SK-N-SH (cell line): ENCODE measurements at regions of chr3 and their contacts with region 1.

Region 1: GRCh38 chr3:120227710-120228347 is 57.2 kb downstream of the GPR156 start:
- DNase-seq: no peak
- H3K4me3 ChIP-seq: no peak overlapping the region
- H3K27ac ChIP-seq: no peak overlapping the region
- H3K4me1 ChIP-seq: no peaks in the 10 kb centered on the region
- H3K27me3 ChIP-seq: no peaks in the 10 kb centered on the region
- CTCF ChIP-seq: no peak
- EP300 ChIP-seq: no peak
- RAD21 ChIP-seq: no peak

Region 2: DNA sequence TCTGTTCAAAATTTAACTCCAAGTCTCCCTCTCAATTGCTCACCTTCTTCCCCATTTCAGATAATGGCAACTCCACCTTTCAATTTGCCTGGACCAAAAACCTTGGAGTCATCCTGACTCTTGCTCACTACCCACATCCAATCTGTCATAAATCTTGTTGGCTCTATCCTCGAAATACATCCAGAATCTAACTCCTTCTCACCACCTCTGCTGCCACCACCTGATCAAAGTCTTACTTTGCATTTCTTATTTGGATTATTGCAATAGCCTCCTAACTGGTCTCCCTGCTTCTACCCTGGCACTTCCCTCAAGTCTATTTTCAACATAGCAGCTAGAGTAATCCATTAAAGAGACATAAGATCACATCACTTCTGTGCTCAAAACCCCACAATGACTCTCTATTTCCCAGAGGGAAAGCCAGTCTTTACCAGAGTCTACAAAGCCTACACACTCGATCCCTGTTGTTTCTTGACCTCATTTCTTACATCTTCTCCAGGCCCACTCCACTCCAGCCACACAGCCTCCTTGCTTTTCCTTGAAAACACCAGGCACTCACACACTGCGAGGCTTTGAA is 29.4 kb before region 1 on chr3:
- CTCF ChIA-PET with region 1: no interaction called
- POLR2A ChIA-PET with region 1: no interaction called
- DNase-seq: no peak
- H3K4me3 ChIP-seq: no peak overlapping the region
- H3K27ac ChIP-seq: no peak overlapping the region
- H3K4me1 ChIP-seq: peaks cover 5 to 9% of the 10 kb centered on the region in 2 experiments; a peak in 2 of 4 replicates
- H3K27me3 ChIP-seq: no peaks in the 10 kb centered on the region
- CTCF ChIP-seq: peak; percentile 48
- EP300 ChIP-seq: no peak
- RAD21 ChIP-seq: peak; percentile 64

Region 3: GRCh38 chr3:120245386-120245785 is 17.6 kb after region 1 on chr3:
- CTCF ChIA-PET with region 1: interaction called, 20 read pairs
- POLR2A ChIA-PET with region 1: no interaction called
- DNase-seq: no peak
- H3K4me3 ChIP-seq: no peak overlapping the region
- H3K27ac ChIP-seq: no peak overlapping the region
- H3K4me1 ChIP-seq: peaks cover 0 to 3% of the 10 kb centered on the region in 2 experiments; a peak in 1 of 4 replicates
- H3K27me3 ChIP-seq: no peaks in the 10 kb centered on the region
- CTCF ChIP-seq: no peak
- EP300 ChIP-seq: no peak
- RAD21 ChIP-seq: no peak